GM13977 (cell line): ENCODE measurements at regions of chrX and their contacts with region 1.

Region 1: DNA sequence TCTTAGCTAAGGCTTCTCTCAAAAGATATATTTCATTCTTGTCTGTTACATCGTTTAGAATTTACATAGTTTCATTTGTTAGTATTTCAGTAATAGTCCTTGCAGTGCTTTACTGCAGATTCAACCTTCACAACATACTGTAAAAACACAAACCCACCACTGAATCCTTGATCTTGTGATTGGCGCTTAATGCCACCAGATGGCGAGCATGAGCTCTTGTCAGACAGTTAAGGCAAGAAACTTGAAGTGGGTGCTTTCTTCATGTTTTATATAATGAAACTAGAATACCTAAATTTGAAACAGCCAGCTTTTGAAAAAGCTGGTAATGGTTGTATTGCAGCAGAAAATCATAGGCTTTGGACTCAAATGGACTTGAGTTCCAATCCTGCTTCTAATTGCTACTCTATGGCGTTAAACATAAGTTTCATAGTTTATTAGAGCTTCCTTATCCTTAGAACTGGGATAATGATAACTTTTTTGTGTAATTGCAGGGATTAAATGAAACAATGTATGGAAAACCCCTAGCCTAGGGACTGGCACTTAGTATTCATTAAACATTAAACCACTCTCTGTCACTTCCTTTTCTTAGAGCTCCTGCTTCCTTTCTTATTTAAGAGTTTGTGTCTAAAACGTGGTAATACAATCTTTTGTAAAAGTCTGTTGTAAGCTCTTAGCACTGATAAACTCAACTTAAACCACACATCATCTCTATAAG is 95.1 kb downstream of the USP9X start:
- DNase-seq: peak; percentile 57
- CTCF ChIP-seq: peak; percentile 75

Region 2: GRCh38 chrX:41245641-41246040 is 65.3 kb after region 1 on chrX:
- in situ Hi-C with region 1: loop called (anchors 5 kb)
- DNase-seq: no peak
- CTCF ChIP-seq: no peak